Ascending aorta (tissue), 2 donors: ENCODE measurements at regions of chr20 and their contacts with region 1.

Region 1: GRCh38 chr20:63980806-63981728 is at the start of gene PRPF6:
- DNase-seq: peak; percentile 71 to 95
- H3K4me3 ChIP-seq: peak within 1 kb of the TSS; percentile 83 to 92
- H3K27ac ChIP-seq: peak within 1 kb of the TSS; percentile 81 to 89
- H3K4me1 ChIP-seq: peaks cover 18 to 26% of the 10 kb centered on the region in 2 donors
- H3K27me3 ChIP-seq: no peaks in the 10 kb centered on the region
- CTCF ChIP-seq: peak; percentile 78 to 88 (median 84)
- total RNA-seq, gene PRPF6: 33.5 TPM

Region 2: GRCh38 chr20:63894358-63895201 is 86.5 kb before region 1 on chr20 and contains the start of gene DNAJC5:
- intact Hi-C with region 1: loop called (anchors 1 kb)
- DNase-seq: peak; percentile 64 to 96
- H3K4me3 ChIP-seq: peak within 1 kb of the TSS; percentile 77 to 91
- H3K27ac ChIP-seq: peak within 1 kb of the TSS; percentile 62 to 63
- H3K4me1 ChIP-seq: peaks cover 11 to 12% of the 10 kb centered on the region in 2 donors
- H3K27me3 ChIP-seq: no peaks in the 10 kb centered on the region
- CTCF ChIP-seq: no peak
- total RNA-seq, gene DNAJC5: 42.9 TPM

Region 3: DNA sequence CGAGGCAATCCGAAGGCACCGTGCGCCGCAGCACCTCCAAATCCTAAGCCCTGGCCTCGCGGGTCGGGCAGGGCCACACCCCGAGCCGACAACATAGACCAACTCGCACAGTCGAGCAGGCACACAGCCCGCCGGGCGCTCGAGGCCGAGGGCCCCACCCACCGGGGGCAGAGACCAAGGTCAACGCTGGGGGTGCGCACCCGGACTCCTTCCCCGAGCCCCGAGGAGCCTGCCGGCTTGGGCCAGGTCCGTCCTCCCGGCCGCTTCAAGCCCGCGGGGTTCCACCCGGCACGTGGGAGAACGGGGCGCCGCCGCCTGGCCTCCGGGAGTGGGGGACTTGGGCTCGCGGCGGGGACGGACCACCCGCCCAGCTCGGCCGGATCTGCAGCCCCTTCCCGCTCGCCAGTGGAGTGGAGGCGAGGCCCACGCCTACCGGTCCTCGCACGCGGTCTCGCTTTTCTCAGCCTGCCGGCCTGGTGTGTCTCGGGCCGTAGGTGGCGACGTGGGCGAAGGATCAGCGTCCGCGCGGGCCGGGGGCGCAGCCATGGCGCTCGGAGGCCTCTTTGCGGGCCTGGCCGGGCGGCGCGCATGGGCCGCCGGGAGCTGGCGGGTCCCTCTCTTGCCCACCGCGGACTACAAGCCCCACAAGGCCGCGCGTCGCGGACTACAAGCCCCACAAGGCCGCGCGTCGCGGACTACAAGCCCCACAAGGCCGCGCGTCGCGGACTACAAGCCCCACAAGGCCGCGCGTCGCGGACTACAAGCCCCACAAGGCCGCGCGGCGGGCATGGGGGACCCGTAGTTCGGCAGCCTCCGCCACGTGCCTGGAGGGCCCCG is 25.0 kb before region 1 on chr20 and contains the start of gene UCKL1:
- intact Hi-C with region 1: loop called (anchors 1 kb)
- DNase-seq: peak; percentile 73 to 96
- H3K4me3 ChIP-seq: peak within 1 kb of the TSS; percentile 75 to 93
- H3K27ac ChIP-seq: peak within 1 kb of the TSS; percentile 82 to 87
- H3K4me1 ChIP-seq: peaks cover 7 to 35% of the 10 kb centered on the region in 2 donors
- H3K27me3 ChIP-seq: no peaks in the 10 kb centered on the region
- CTCF ChIP-seq: no peak
- total RNA-seq, gene UCKL1: 95.4 TPM

Region 4: GRCh38 chr20:63969838-63970713 is 11.0 kb before region 1 on chr20 and contains the start of gene ZNF512B:
- intact Hi-C with region 1: no loop called
- DNase-seq: peak in 1 of 2 donors; percentile 75
- H3K4me3 ChIP-seq: peak within 1 kb of the TSS; percentile 70 to 84
- H3K27ac ChIP-seq: peak within 1 kb of the TSS; percentile 70 to 79
- H3K4me1 ChIP-seq: peaks cover 16% of the 10 kb centered on the region in 2 donors
- H3K27me3 ChIP-seq: no peaks in the 10 kb centered on the region
- CTCF ChIP-seq: no peak
- total RNA-seq, gene ZNF512B: 17.5 TPM

Region 5: DNA sequence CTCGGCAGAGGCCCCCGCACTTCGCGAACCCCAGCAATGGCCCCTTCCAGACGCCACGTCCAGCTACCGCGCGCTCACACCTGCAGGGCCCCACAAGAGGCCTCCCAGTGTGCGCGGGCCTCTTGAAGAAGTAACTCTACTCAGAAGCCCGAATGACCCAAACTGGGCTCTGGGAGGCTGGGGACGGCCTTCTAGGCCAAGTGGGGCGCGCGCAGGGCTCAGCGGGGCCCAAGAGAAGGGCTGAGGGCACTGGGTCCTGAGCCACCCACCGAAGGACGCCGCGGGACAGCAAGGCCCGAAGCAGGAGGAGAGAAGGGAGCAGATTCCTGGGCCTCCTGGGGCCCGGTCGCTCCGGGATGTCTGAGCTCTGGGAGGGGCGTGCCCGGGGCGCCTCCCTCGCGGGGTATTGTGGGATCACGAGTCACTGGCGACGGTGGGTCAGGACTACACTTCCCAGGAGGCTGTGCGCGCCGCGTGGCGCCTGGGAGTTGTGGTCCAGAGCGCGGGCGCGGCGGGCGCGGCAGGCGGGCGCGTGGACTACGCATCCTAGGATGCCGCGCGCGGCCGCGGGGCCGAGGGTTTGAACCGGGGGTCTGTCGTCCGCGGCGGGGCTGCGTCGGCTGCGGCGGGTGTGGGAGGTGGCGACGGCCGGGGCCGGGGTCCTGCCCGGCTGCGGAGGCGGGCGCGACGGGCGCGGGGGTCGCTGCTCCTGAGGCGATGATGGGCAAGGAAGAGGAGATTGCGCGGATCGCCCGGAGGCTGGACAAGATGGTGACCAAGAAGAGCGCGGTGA is 81.7 kb after region 1 on chr20 and contains the start of gene TCEA2:
- intact Hi-C with region 1: loop called (anchors 1 kb)
- DNase-seq: peak; percentile 89 to 98
- H3K4me3 ChIP-seq: peak within 1 kb of the TSS; percentile 76 to 93
- H3K27ac ChIP-seq: peak within 1 kb of the TSS; percentile 87 to 90
- H3K4me1 ChIP-seq: peaks cover 16 to 22% of the 10 kb centered on the region in 2 donors
- H3K27me3 ChIP-seq: no peaks in the 10 kb centered on the region
- CTCF ChIP-seq: no peak
- total RNA-seq, gene TCEA2: 61.4 TPM

Region 6: GRCh38 chr20:64091770-64092169 is 110.7 kb after region 1 on chr20:
- intact Hi-C with region 1: no loop called
- DNase-seq: no peak
- H3K4me3 ChIP-seq: no peak overlapping the region
- H3K27ac ChIP-seq: no peak overlapping the region
- H3K4me1 ChIP-seq: no peaks in the 10 kb centered on the region
- H3K27me3 ChIP-seq: no peaks in the 10 kb centered on the region
- CTCF ChIP-seq: no peak